ENCODE measurements at regions of chr17 and their contacts with region 1.

Region 1: DNA sequence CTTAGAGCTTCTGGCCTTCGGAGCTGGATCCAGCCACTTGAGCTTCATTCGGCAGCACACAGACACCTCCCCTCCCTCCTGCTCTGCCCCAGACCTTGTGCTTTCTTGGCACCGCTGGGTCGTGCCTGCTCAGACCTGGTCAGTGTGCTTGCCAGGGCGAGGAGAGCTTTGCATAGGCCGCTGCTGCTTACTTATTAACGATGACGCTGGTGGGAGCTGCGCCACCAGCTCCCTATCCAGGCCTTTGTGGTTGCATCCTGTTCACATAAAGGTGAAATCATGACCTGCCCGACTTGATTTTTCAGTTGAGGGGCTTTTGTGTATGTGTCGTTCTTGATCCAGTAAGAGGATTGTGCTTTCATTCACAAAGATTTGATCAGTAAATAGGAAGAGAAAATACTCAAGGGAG is 101.1 kb downstream of the MSI2 start:
- DNase-seq: peak in 1 of 2 experiments; percentile 58
- H3K4me3 ChIP-seq: no peak overlapping the region
- H3K27ac ChIP-seq: peak overlapping the region; percentile 38; the same call in 1 of the 2 replicates
- H3K4me1 ChIP-seq: peaks cover 9% of the 10 kb centered on the region
- H3K27me3 ChIP-seq: peaks cover 10% of the 10 kb centered on the region; the same call in 1 of the 2 replicates
- CTCF ChIP-seq: no peak

Region 2: GRCh38 chr17:57329380-57330214 is 27.8 kb before region 1 on chr17:
- CTCF ChIA-PET with region 1: no interaction called
- POLR2A ChIA-PET with region 1: no interaction called
- intact Hi-C with region 1: no loop called
- DNase-seq: no peak
- H3K4me3 ChIP-seq: no peak overlapping the region
- H3K27ac ChIP-seq: no peak overlapping the region
- H3K4me1 ChIP-seq: no peaks in the 10 kb centered on the region
- H3K27me3 ChIP-seq: peaks cover 11% of the 10 kb centered on the region; the same call in 1 of the 2 replicates
- CTCF ChIP-seq: no peak

Region 3: GRCh38 chr17:57518587-57519581 is 161.5 kb after region 1 on chr17:
- CTCF ChIA-PET with region 1: no interaction called
- POLR2A ChIA-PET with region 1: no interaction called
- intact Hi-C with region 1: no loop called
- DNase-seq: peak; percentile 25 to 69
- H3K4me3 ChIP-seq: no peak overlapping the region
- H3K27ac ChIP-seq: no peak overlapping the region
- H3K4me1 ChIP-seq: peaks cover 7% of the 10 kb centered on the region; the same call in 1 of the 2 replicates
- H3K27me3 ChIP-seq: peaks cover 13% of the 10 kb centered on the region
- CTCF ChIP-seq: no peak

Region 4: DNA sequence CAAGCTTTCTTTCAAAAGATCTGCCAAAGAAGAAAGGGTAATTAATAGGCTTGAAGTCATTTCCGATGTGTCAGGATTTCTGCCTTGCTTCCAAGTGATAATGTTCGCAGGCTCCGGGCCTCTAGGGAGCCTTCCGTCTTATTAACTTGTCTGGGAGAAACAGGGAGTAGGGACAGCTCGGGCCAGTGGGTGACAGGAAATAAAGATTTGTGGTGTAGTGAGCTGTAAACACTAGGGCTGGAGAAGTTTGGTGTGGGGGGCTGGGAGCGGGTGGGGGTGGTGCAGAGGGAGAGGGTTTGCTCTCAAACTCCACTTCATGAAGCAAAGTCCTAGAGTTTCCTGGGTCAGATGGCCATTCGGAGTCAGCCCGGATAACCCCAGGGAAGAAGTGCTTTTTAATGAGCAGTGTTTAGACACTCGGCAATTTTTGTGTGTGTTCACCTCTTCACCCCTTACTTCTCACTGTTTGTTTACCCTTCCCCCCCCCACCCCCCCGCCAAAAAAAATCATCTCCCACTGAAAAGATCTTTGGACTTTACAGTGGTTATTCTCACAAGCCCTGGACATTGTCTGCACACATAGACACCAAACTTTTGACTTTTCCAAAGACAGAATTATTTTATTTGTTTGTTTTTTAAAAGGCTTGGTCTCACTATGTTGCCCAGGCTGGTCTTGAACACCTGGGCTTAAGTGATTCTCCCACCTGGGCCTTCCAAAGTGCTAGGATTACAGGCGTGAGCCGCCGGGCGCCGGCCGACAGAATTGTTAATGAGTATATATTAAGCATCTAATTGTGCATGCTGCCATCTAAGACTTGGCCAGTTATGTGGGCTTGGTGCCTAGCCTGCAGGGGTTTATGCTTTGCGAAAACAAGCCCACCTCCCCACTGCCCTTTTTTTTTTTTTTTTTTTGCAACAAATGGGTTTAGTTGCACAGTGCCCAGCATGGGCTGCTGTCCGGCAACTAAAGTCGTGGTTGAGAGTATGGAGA is 191.3 kb after region 1 on chr17:
- CTCF ChIA-PET with region 1: interaction called, 11 read pairs
- POLR2A ChIA-PET with region 1: no interaction called
- intact Hi-C with region 1: no loop called
- DNase-seq: no peak
- H3K4me3 ChIP-seq: no peak overlapping the region
- H3K27ac ChIP-seq: no peak overlapping the region
- H3K4me1 ChIP-seq: no peaks in the 10 kb centered on the region
- H3K27me3 ChIP-seq: peaks cover 23% of the 10 kb centered on the region
- CTCF ChIP-seq: no peak